Panc1 (cell line): ENCODE measurements at regions of chr11 and their contacts with region 1.

Region 1: GRCh38 chr11:46718155-46719019 is 626 bp upstream of the F2 start:
- DNase-seq: no peak
- ATAC-seq: peak; percentile 87
- H3K4me3 ChIP-seq: no peak overlapping the region
- H3K27ac ChIP-seq: peak overlapping the region; percentile 58
- H3K4me1 ChIP-seq: peaks cover 14% of the 10 kb centered on the region
- H3K27me3 ChIP-seq: no peaks in the 10 kb centered on the region
- CTCF ChIP-seq: no peak

Region 2: DNA sequence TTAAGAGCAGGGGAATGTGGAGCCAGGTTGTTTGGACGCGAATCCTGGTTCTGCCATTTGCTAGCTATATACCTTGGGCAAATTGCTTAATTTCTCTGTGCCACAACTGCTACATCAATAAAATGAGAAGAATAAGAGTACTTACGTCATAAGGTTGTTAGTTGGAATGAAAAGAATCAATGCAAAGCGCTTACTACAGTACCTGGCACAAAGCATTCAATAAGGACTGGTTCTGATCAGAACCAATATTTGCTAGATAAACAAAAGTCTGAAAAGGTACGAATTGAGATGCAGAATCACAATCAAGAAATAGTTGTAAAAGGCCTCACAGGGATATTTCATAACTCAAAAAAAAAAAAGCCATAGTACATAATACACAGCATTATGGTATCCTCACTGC is 135.8 kb before region 1 on chr11:
- CTCF ChIA-PET with region 1: no interaction called
- POLR2A ChIA-PET with region 1: interaction called, 12 read pairs
- in situ Hi-C with region 1: no loop called
- intact Hi-C with region 1: no loop called
- DNase-seq: no peak
- ATAC-seq: no peak
- H3K4me3 ChIP-seq: no peak overlapping the region
- H3K27ac ChIP-seq: no peak overlapping the region
- H3K4me1 ChIP-seq: peaks cover 2% of the 10 kb centered on the region; the same call in 1 of the 2 replicates
- H3K27me3 ChIP-seq: no peaks in the 10 kb centered on the region
- CTCF ChIP-seq: no peak

Region 3: DNA sequence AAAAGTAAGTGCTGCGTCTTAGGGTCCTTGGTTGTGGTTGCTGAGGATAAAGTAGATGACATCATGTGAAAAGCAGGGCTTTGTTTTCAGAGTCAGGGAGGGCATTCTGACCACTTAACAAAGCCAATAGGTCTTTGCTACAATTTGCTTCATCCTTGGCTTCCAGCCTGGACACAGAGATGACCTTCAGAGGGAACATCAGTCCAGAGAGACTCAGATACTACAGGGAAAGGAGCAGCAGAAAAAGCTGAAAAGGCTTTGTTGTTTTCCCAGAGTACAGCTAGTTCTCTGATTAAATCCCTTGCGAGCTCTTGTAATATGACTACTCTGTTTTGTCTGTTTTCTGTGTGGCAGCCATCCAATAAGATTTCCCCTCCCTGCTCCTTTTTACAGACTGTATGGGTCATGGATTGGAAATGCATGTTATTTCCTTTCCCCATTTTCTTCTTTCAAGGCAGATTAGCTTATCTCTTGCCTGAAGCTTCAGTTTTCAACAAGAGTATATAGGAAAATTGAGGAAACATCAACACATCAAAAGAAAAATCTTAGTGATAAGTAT is 69.1 kb before region 1 on chr11:
- CTCF ChIA-PET with region 1: no interaction called
- POLR2A ChIA-PET with region 1: no interaction called
- in situ Hi-C with region 1: no loop called
- intact Hi-C with region 1: no loop called
- DNase-seq: no peak
- ATAC-seq: no peak
- H3K4me3 ChIP-seq: no peak overlapping the region
- H3K27ac ChIP-seq: no peak overlapping the region
- H3K4me1 ChIP-seq: no peaks in the 10 kb centered on the region
- H3K27me3 ChIP-seq: no peaks in the 10 kb centered on the region
- CTCF ChIP-seq: no peak

Region 4: DNA sequence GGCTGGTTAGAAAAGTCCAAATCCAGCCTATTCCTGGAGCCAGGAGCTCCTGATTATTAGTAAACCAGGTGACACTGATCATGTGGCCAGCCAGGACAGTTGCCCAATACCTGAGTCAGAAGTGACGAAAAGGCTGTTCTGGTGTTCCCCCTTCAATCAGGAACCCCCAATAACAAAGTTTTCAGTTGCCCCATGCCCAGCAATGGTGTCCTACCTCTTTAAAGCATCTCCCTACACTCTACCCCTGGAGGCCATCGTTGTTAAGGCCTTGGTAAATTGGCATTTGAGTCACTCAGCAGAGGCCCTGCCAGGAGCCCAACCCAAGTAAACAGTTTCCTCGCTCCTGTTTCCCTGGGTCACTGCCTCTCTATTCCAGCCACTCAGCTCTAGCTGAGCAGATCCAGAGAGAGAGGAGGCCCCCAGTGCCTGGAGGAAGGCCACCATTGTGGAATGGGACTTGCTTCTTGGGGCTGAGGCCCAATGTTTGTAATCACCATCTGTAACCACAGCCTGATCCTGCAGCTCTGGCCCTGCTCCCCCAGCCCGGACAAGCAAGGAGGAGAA is 43.0 kb before region 1 on chr11:
- CTCF ChIA-PET with region 1: no interaction called
- POLR2A ChIA-PET with region 1: no interaction called
- in situ Hi-C with region 1: no loop called
- intact Hi-C with region 1: no loop called
- DNase-seq: no peak
- ATAC-seq: peak; percentile 56
- H3K4me3 ChIP-seq: no peak overlapping the region
- H3K27ac ChIP-seq: peak overlapping the region; percentile 52
- H3K4me1 ChIP-seq: peaks cover 8% of the 10 kb centered on the region
- H3K27me3 ChIP-seq: no peaks in the 10 kb centered on the region
- CTCF ChIP-seq: no peak

Region 5: DNA sequence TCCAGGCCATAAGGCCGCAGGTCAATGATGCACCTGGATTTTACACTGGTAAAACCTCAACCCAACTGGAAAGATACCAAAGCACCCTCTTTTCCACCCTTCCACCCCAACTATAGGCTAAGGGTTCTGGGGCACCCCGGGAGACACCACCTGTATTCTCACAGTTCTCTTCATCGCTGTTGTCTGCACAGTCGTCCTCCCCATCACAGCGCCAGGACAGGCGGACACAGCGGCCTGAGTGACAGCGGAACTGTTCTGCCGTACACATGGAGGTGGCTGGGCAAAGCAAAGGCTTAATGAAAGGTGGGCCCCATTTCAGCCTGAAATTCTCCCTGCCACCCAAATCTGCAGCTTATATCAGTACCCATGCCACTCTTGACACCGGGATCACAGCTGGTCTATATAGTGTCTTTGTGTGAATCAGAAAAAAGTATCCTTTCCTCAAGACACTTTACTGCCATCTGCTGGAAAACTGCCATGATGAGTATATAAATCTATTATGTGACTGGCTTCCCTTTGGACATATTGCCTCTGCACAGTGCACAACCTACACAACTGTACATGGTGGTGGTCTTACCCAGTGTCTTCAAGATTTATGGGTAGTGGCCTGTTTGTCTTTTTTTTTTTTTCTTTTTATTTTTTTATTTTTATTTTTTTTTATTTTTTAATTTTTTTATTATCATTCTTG is 178.5 kb after region 1 on chr11:
- CTCF ChIA-PET with region 1: no interaction called
- POLR2A ChIA-PET with region 1: no interaction called
- in situ Hi-C with region 1: no loop called
- intact Hi-C with region 1: no loop called
- DNase-seq: no peak
- ATAC-seq: peak; percentile 61
- H3K4me3 ChIP-seq: no peak overlapping the region
- H3K27ac ChIP-seq: no peak overlapping the region
- H3K4me1 ChIP-seq: no peaks in the 10 kb centered on the region
- H3K27me3 ChIP-seq: no peaks in the 10 kb centered on the region
- CTCF ChIP-seq: no peak; the same call in 1 of the 2 replicates